ENCODE measurements at regions of chr3 and their contacts with region 1.

Region 1: GRCh38 chr3:150627557-150627956 is 24.4 kb downstream of the SELENOT start:
- DNase-seq: no peak
- H3K4me3 Mint-ChIP-seq: no peak overlapping the region
- H3K27ac Mint-ChIP-seq: no peak overlapping the region
- H3K4me1 Mint-ChIP-seq: no peaks in the 10 kb centered on the region
- H3K27me3 Mint-ChIP-seq: no peaks in the 10 kb centered on the region

Region 2: GRCh38 chr3:150335631-150336030 is 291.9 kb before region 1 on chr3:
- intact Hi-C with region 1: no loop called
- DNase-seq: no peak
- H3K4me3 Mint-ChIP-seq: no peak overlapping the region
- H3K27ac Mint-ChIP-seq: no peak overlapping the region
- H3K4me1 Mint-ChIP-seq: no peaks in the 10 kb centered on the region
- H3K27me3 Mint-ChIP-seq: peaks cover 23% of the 10 kb centered on the region

Region 3: DNA sequence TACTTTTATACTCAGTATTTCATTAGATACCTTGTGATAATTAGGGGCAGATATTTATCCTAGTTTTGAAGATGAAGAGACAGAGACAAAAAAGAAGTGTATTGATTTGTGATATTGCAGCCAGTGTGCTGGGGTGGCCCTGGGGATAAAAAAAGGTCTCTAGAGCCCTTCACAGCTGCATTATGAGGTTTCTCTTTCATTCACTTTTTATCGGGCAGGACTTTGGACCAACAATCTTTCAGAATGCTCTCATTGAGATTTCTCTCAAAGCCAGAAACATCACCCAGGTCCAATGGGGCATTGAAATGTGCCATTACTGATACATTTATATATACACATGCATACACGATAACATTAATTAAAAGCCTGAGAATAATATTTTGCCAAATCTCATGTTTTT is 44.9 kb before region 1 on chr3:
- intact Hi-C with region 1: loop called (anchors 5 kb)
- DNase-seq: no peak
- H3K4me3 Mint-ChIP-seq: no peak overlapping the region
- H3K27ac Mint-ChIP-seq: peak overlapping the region; percentile 74
- H3K4me1 Mint-ChIP-seq: peaks cover 14% of the 10 kb centered on the region
- H3K27me3 Mint-ChIP-seq: no peaks in the 10 kb centered on the region

Region 4: DNA sequence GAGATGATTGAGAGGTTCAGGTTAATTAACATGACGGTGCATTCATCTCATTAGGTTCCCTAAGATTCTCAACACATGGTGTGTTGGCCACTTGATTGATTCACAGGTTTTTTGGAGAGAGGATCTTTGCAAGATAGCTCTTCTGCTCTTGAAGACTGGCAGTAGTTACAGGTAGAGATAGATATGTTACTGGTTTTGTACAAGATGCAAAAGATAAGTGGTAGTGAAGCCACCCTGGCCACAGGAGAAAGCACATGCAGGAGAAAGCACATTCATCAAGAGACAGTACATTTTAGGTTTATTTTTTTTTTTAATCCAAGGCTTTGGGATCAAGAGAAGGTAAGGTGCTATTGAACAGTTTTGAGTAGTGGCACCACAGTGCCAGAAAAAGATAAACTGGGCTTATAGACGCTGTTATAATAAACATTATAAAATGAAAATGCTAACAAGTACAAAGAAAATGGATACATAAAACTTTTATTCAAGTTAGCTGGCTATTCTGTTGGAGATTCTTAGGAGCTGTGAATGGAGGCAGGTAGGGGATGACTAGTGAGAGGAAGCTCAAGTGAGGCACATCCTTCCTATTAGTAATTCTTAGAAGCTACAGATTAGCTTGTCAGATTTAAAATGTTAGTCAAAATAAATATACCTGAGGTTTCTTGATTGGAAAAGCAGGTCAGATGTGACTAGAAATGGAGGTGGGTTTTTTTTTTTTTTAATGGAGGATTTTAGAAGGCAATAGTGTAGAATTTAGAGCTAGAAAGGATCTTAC is 13.7 kb before region 1 on chr3:
- intact Hi-C with region 1: no loop called
- DNase-seq: no peak
- H3K4me3 Mint-ChIP-seq: no peak overlapping the region
- H3K27ac Mint-ChIP-seq: peak overlapping the region; percentile 35
- H3K4me1 Mint-ChIP-seq: peaks cover 56% of the 10 kb centered on the region
- H3K27me3 Mint-ChIP-seq: no peaks in the 10 kb centered on the region

Region 5: DNA sequence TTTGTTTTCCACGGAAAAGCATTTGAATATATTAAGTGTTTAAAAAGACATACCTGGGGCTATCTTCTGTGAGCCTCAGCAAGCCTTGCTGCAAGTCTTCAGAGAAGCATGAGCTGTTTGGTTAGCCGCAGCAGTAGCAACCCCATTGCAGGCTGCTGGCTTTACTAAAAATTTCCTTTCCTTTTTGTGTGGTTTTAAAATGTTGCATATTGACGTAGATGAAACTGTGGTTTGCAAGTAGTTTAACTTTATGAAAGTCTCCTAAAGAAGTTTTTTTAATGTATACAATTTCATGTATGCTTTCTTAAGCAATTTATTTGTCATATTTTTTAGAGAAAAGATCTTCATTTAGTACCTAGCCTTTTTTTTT is 575.5 kb after region 1 on chr3 and contains the start of gene GPR171:
- intact Hi-C with region 1: no loop called
- DNase-seq: peak; percentile 72
- H3K4me3 Mint-ChIP-seq: peak within 1 kb of the TSS; percentile 96
- H3K27ac Mint-ChIP-seq: peak within 1 kb of the TSS; percentile 99
- H3K4me1 Mint-ChIP-seq: peaks cover 73% of the 10 kb centered on the region
- H3K27me3 Mint-ChIP-seq: no peaks in the 10 kb centered on the region
- total RNA-seq, gene GPR171: 172 and 191 TPM in 2 replicates